HepG2 (cell line): ENCODE measurements at regions of chr3 and their contacts with region 1.

Region 1: GRCh38 chr3:171829841-171830517 is 13.2 kb upstream of the TMEM212 start:
- DNase-seq: peak; percentile 81
- ATAC-seq: peak; percentile 99
- H3K4me3 ChIP-seq: peak overlapping the region in 1 of 3 experiments; percentile 22; a peak in 1 of 6 replicates
- H3K27ac ChIP-seq: peak overlapping the region; percentile 31
- H3K4me1 ChIP-seq: peaks cover 79% of the 10 kb centered on the region
- H3K27me3 ChIP-seq: no peaks in the 10 kb centered on the region
- CTCF ChIP-seq: peak; percentile 96
- EP300 ChIP-seq: no peak
- POLR2A ChIP-seq: no peak
- RAD21 ChIP-seq: peak; percentile 94

Region 2: GRCh38 chr3:171187706-171188290 is 642.2 kb before region 1 on chr3:
- CTCF ChIA-PET with region 1: no interaction called
- POLR2A ChIA-PET with region 1: no interaction called
- in situ Hi-C with region 1: no loop called
- intact Hi-C with region 1: loop called (anchors 10 kb)
- DNase-seq: peak; percentile 47
- ATAC-seq: peak; percentile 90
- H3K4me3 ChIP-seq: no peak overlapping the region
- H3K27ac ChIP-seq: no peak overlapping the region
- H3K4me1 ChIP-seq: peaks cover 21% of the 10 kb centered on the region
- H3K27me3 ChIP-seq: no peaks in the 10 kb centered on the region
- CTCF ChIP-seq: peak; percentile 78
- EP300 ChIP-seq: no peak
- POLR2A ChIP-seq: no peak
- RAD21 ChIP-seq: 0 out of 2 replicates have a peak, but pooled peaks have one; percentile 17

Region 3: DNA sequence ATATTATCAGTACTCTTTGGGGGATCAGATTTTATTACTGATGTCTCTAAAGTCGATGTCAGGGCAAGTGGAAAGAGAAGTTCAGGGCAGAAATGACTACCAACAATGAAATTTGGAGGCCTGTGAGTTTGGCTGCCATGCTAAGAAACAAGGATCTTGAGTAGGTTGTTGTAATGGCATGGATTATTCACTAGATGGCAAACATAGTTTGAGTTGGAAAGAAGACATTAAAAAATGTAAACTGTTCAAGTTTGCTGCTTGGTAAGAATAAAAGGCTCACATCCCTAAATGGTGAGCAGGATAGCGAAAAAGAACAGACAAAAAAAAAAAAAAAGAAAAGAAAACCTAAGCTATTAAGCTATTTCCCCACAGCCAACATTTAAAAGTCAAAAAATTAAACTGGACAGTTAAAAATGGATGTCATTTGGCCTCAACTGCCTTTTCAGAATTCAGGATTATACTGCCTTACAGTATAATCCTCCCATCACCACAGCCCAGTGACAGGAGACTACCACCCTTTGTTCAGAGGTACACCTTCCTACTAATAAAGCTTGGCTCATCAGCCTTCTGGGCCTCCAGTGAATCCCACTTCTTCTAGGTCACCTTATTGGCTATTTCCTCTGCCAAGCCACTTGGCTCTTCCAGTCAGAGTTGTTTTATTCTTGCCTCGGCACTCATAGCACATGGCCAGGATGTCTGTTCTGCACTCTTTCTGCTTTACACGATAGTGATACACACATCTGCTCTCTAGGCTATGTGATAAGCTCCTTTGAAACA is 183.4 kb before region 1 on chr3:
- CTCF ChIA-PET with region 1: no interaction called
- POLR2A ChIA-PET with region 1: no interaction called
- in situ Hi-C with region 1: no loop called
- intact Hi-C with region 1: loop called (anchors 1 kb)
- DNase-seq: peak; percentile 7
- ATAC-seq: peak; percentile 38; the same call in 2 of the 3 replicates
- H3K4me3 ChIP-seq: no peak overlapping the region
- H3K27ac ChIP-seq: no peak overlapping the region
- H3K4me1 ChIP-seq: no peaks in the 10 kb centered on the region
- H3K27me3 ChIP-seq: no peaks in the 10 kb centered on the region
- CTCF ChIP-seq: peak; percentile 38
- EP300 ChIP-seq: no peak
- POLR2A ChIP-seq: no peak
- RAD21 ChIP-seq: no peak

Region 4: GRCh38 chr3:171736556-171736955 is 93.4 kb before region 1 on chr3:
- CTCF ChIA-PET with region 1: no interaction called
- POLR2A ChIA-PET with region 1: interaction called, 3 read pairs
- in situ Hi-C with region 1: no loop called
- intact Hi-C with region 1: loop called (anchors 10 kb)
- DNase-seq: peak; percentile 9
- ATAC-seq: peak; percentile 85
- H3K4me3 ChIP-seq: no peak overlapping the region
- H3K27ac ChIP-seq: no peak overlapping the region
- H3K4me1 ChIP-seq: peaks cover 22% of the 10 kb centered on the region
- H3K27me3 ChIP-seq: no peaks in the 10 kb centered on the region
- CTCF ChIP-seq: peak; percentile 26; the same call in 1 of the 2 replicates
- EP300 ChIP-seq: no peak
- POLR2A ChIP-seq: no peak
- RAD21 ChIP-seq: no peak

Region 5: GRCh38 chr3:171772427-171773056 is 57.4 kb before region 1 on chr3:
- CTCF ChIA-PET with region 1: no interaction called
- POLR2A ChIA-PET with region 1: interaction called, 3 read pairs
- in situ Hi-C with region 1: no loop called
- intact Hi-C with region 1: loop called (anchors 5 kb)
- DNase-seq: peak; percentile 46
- ATAC-seq: peak; percentile 48
- H3K4me3 ChIP-seq: no peak overlapping the region
- H3K27ac ChIP-seq: no peak overlapping the region
- H3K4me1 ChIP-seq: peaks cover 52% of the 10 kb centered on the region
- H3K27me3 ChIP-seq: no peaks in the 10 kb centered on the region
- CTCF ChIP-seq: peak; percentile 69
- EP300 ChIP-seq: no peak
- POLR2A ChIP-seq: no peak
- RAD21 ChIP-seq: peak; percentile 45; the same call in 1 of the 2 replicates

Region 6: GRCh38 chr3:171809821-171810628 is 20.0 kb before region 1 on chr3 and contains the start of gene PLD1:
- CTCF ChIA-PET with region 1: no interaction called
- POLR2A ChIA-PET with region 1: interaction called, 59 read pairs
- in situ Hi-C with region 1: no loop called
- intact Hi-C with region 1: loop called (anchors 2 kb)
- DNase-seq: peak; percentile 77
- ATAC-seq: peak; percentile 87
- H3K4me3 ChIP-seq: peak within 1 kb of the TSS; percentile 73 to 91 (median 85)
- H3K27ac ChIP-seq: peak within 1 kb of the TSS; percentile 96
- H3K4me1 ChIP-seq: peaks cover 62% of the 10 kb centered on the region
- H3K27me3 ChIP-seq: no peaks in the 10 kb centered on the region; a peak in 1 of 5 replicates
- CTCF ChIP-seq: peak; percentile 38
- EP300 ChIP-seq: peak in 1 of 2 experiments; percentile 66; a peak in 1 of 4 replicates
- POLR2A ChIP-seq: peak in 1 of 2 experiments; percentile 75; a peak in 2 of 4 replicates
- RAD21 ChIP-seq: peak; percentile 40
- total RNA-seq, gene PLD1: 27.1 and 33.6 TPM in 2 replicates

Region 7: GRCh38 chr3:171846597-171846996 is 16.6 kb after region 1 on chr3:
- CTCF ChIA-PET with region 1: no interaction called
- POLR2A ChIA-PET with region 1: interaction called, 15 read pairs
- in situ Hi-C with region 1: no loop called
- intact Hi-C with region 1: no loop called
- DNase-seq: no peak
- ATAC-seq: peak; percentile 34; the same call in 2 of the 3 replicates
- H3K4me3 ChIP-seq: no peak overlapping the region
- H3K27ac ChIP-seq: peak overlapping the region; percentile 100
- H3K4me1 ChIP-seq: peaks cover 88% of the 10 kb centered on the region
- H3K27me3 ChIP-seq: no peaks in the 10 kb centered on the region
- CTCF ChIP-seq: no peak
- EP300 ChIP-seq: 0 out of 4 replicates have a peak, but pooled peaks of 1 of the 2 experiments have one; percentile 6
- POLR2A ChIP-seq: no peak
- RAD21 ChIP-seq: no peak